HCT116 (cell line): ENCODE measurements at regions of chr7 and their contacts with region 1.

Region 1: GRCh38 chr7:149195180-149196150 is at the start of gene ZNF282:
- DNase-seq: peak; percentile 67
- ATAC-seq: peak; percentile 96
- H3K4me3 ChIP-seq: peak within 1 kb of the TSS; percentile 91 to 95
- H3K27ac ChIP-seq: peak within 1 kb of the TSS; percentile 99
- H3K4me1 ChIP-seq: peaks cover 10 to 17% of the 10 kb centered on the region in 2 experiments
- H3K27me3 ChIP-seq: no peaks in the 10 kb centered on the region
- CTCF ChIP-seq: peak; percentile 55 to 76 (median 65)
- POLR2A ChIP-seq: peak; percentile 67
- RAD21 ChIP-seq: peak; percentile 69
- total RNA-seq, gene ZNF282: 30.4 TPM

Region 2: DNA sequence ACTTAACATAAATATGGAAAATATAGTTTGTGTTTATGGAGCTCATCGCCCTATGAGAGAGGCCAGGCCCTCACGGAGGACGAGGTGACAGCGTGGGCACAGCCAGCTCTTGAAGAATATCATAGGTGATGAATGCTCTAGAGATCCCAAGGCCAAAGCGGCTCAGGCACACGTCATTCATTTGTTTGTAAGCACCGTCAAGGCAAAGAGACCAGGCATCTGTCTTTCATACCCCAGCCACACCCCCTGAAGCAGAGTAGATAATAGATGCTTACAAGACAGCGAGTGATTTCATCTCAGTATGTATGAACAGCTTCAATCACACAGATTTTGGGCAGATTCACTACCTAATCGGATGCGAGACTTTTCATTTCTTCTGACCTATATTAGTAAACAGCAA is 847.0 kb before region 1 on chr7:
- CTCF ChIA-PET with region 1: no interaction called
- POLR2A ChIA-PET with region 1: no interaction called
- RAD21 ChIA-PET with region 1: no interaction called
- intact Hi-C with region 1: no loop called
- DNase-seq: no peak
- ATAC-seq: no peak
- H3K4me3 ChIP-seq: no peak overlapping the region
- H3K27ac ChIP-seq: no peak overlapping the region
- H3K4me1 ChIP-seq: no peaks in the 10 kb centered on the region
- H3K27me3 ChIP-seq: peaks cover 16% of the 10 kb centered on the region; the same call in 1 of the 2 replicates
- CTCF ChIP-seq: no peak
- POLR2A ChIP-seq: no peak
- RAD21 ChIP-seq: no peak

Region 3: DNA sequence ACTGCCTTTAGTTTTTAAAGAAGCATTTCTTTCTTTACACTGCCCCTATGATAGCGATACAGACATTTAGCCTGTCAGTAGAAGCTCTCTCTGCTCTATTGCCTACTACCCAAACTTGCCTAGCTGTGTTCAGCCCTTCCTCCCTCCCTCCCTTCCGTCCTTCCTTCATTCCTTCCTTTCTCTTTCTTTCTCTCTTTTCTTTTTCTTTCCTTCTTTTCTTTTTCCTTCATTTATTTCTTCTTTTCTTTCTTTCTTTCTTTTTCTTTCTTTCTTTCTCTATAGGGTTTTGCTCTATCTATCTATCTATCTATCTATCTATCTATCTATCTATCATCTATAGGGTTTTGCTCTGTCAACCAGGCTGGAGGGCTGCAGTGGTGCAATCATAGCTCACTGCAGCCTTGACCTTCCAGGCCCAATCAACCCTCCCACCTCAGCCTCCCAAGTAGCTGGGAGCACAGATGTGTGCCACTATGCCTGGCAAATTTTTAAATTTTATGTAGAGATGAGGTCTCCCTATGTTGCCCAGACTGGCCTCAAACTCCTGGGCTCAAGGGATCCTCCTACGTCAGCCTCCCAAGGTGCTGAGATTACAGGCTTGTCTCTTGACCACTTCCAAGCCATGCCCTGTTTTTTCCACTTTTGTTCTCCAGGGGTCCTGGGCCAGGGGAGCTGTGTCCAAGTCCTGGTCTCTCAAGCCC is 37.0 kb after region 1 on chr7:
- CTCF ChIA-PET with region 1: no interaction called
- POLR2A ChIA-PET with region 1: no interaction called
- RAD21 ChIA-PET with region 1: no interaction called
- intact Hi-C with region 1: loop called (anchors 5 kb)
- DNase-seq: no peak
- ATAC-seq: no peak
- H3K4me3 ChIP-seq: no peak overlapping the region
- H3K27ac ChIP-seq: peak overlapping the region; percentile 39; the same call in 1 of the 2 replicates
- H3K4me1 ChIP-seq: peaks cover 20 to 32% of the 10 kb centered on the region in 2 experiments
- H3K27me3 ChIP-seq: no peaks in the 10 kb centered on the region
- CTCF ChIP-seq: no peak
- POLR2A ChIP-seq: no peak
- RAD21 ChIP-seq: no peak